WTC11 (cell line): ENCODE measurements at regions of chr10 and their contacts with region 1.

Region 1: GRCh38 chr10:71569775-71570588 is 149.6 kb downstream of the C10orf105 start:
- DNase-seq: peak; percentile 92
- ATAC-seq: peak; percentile 62
- H3K4me3 Mint-ChIP-seq: no peak overlapping the region
- H3K27ac Mint-ChIP-seq: no peak overlapping the region
- H3K4me1 Mint-ChIP-seq: peaks cover 7% of the 10 kb centered on the region
- H3K27me3 Mint-ChIP-seq: no peaks in the 10 kb centered on the region; the same call in 1 of the 2 replicates
- CTCF ChIP-seq: peak; percentile 91

Region 2: DNA sequence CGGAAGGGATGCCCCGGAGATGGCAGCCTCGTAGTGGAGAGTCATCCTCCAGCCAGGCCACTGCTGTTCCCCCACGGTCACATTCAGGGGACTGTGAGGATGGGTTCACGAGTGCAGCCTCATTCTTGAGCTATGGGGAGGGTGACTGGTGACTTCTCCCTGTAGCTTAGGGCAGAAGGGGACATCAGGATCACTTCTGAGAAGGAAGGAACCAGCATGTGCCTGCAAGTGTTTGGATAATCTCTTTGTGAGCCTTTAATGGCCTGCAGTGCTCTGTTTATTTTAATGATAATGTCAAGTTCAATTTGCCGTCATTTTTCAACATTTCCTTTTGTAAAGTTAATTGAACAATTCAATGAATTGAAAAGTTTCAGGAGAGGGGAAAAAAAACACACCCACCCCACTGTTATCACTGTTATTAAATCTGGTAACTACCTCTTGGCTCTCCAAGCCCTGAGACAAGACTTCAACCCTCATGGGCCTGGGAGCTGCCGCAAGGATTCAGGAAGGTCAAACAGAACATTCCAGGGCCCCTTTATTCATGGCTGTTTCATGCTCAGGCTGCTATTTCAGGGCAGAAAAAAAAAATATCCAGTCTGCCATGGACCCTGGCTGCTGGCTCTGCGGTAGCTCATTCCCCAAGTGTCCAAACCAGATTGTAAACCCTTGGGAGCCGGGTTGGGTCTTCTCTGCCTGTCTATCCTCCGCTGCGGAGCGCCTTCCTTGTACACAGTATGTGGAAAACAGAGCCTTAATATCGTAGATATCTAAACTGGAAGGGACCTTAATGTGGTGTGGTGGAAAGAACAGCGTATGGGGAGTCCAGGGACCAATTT is 72.8 kb before region 1 on chr10:
- CTCF ChIA-PET with region 1: interaction called, 20 read pairs
- POLR2A ChIA-PET with region 1: no interaction called
- DNase-seq: no peak
- ATAC-seq: peak; percentile 55
- H3K4me3 Mint-ChIP-seq: no peak overlapping the region
- H3K27ac Mint-ChIP-seq: no peak overlapping the region
- H3K4me1 Mint-ChIP-seq: peaks cover 32% of the 10 kb centered on the region
- H3K27me3 Mint-ChIP-seq: peaks cover 91% of the 10 kb centered on the region
- CTCF ChIP-seq: no peak

Region 3: DNA sequence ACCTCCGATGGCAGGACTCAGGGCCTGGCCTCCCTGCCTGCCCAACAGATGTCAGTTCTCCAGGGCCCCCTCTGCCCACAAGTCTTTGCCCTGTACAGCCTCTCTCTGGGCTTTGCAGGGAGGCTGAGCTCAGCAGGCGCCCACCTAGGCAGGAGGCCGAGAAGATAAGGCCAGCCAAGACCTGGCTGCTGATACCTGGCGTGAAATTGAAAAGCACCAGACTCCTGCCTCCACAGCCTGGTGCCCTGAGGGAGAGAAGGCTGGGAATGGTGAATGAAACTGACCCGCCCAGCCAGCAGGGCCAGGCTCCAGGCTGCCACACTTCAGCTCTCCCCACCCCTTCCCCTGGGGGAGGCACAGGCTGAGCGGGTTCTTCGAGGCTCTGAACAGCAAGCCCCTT is 27.5 kb before region 1 on chr10:
- CTCF ChIA-PET with region 1: interaction called, 37 read pairs
- POLR2A ChIA-PET with region 1: no interaction called
- DNase-seq: no peak
- ATAC-seq: no peak
- H3K4me3 Mint-ChIP-seq: no peak overlapping the region
- H3K27ac Mint-ChIP-seq: no peak overlapping the region
- H3K4me1 Mint-ChIP-seq: peaks cover 56% of the 10 kb centered on the region
- H3K27me3 Mint-ChIP-seq: no peaks in the 10 kb centered on the region; the same call in 1 of the 2 replicates
- CTCF ChIP-seq: no peak

Region 4: GRCh38 chr10:71553432-71553831 is 16.6 kb before region 1 on chr10:
- CTCF ChIA-PET with region 1: interaction called, 37 read pairs
- POLR2A ChIA-PET with region 1: no interaction called
- DNase-seq: no peak
- ATAC-seq: peak; percentile 59
- H3K4me3 Mint-ChIP-seq: no peak overlapping the region
- H3K27ac Mint-ChIP-seq: no peak overlapping the region
- H3K4me1 Mint-ChIP-seq: peaks cover 46% of the 10 kb centered on the region
- H3K27me3 Mint-ChIP-seq: no peaks in the 10 kb centered on the region
- CTCF ChIP-seq: no peak

Region 5: DNA sequence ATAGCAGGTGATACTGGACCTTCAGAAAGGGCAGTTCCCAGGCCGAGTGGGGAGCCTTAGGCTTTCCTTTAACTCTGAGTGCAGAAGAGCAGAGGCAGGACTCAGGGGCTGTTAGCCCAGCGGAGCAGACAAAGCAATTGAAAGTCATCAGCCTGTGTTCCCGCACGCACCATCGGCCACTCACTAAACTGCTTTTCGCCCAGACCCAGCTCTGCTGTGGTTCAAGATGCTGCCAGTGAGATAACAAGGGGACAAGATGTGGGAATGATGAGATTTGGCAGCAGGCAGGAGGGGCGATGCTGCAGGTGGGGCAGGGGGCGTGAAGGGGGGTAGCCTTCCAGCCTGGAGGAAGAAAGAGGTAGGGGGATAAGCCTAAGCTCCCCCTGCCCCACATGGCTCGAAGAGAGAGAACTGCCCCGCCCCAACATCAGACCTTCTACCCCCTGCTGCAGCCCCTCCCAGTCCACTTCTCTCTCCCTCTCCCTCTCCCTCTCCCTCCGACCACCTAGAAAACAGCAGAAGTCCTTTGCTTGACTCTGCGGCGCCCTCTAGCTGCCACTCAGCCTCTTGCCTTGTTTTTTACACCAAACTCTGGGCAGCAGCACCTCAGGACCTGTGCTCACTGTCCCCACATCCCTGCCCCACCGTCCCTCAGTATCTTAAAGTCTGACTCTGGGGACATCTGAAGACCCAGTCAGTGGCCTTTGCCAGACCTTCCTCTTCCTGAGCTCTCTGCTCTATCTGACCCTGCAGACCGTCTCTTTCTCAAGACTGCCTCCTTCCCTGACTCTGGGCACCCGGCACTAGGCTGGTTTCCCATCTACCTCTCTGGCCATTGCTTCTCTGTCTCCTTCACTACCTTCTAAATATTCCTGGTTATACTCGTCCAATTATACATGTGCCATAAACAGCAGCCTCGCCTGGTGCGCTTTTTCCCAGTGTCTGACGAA is 39.1 kb after region 1 on chr10:
- CTCF ChIA-PET with region 1: interaction called, 53 read pairs
- POLR2A ChIA-PET with region 1: interaction called, 5 read pairs
- DNase-seq: peak; percentile 93
- ATAC-seq: peak; percentile 75
- H3K4me3 Mint-ChIP-seq: no peak overlapping the region
- H3K27ac Mint-ChIP-seq: no peak overlapping the region
- H3K4me1 Mint-ChIP-seq: peaks cover 53% of the 10 kb centered on the region
- H3K27me3 Mint-ChIP-seq: no peaks in the 10 kb centered on the region
- CTCF ChIP-seq: peak; percentile 67

Region 6: GRCh38 chr10:71643904-71644303 is 73.9 kb after region 1 on chr10:
- CTCF ChIA-PET with region 1: no interaction called
- POLR2A ChIA-PET with region 1: no interaction called
- DNase-seq: no peak
- ATAC-seq: no peak
- H3K4me3 Mint-ChIP-seq: no peak overlapping the region
- H3K27ac Mint-ChIP-seq: no peak overlapping the region
- H3K4me1 Mint-ChIP-seq: peaks cover 50% of the 10 kb centered on the region
- H3K27me3 Mint-ChIP-seq: peaks cover 12% of the 10 kb centered on the region
- CTCF ChIP-seq: no peak